Activated CD4-positive, alpha-beta T cell treated with anti-CD3 and anti-CD28 coated beads for 36 hours (primary cell): ENCODE measurements at regions of chr9 and their contacts with region 1.

Region 1: DNA sequence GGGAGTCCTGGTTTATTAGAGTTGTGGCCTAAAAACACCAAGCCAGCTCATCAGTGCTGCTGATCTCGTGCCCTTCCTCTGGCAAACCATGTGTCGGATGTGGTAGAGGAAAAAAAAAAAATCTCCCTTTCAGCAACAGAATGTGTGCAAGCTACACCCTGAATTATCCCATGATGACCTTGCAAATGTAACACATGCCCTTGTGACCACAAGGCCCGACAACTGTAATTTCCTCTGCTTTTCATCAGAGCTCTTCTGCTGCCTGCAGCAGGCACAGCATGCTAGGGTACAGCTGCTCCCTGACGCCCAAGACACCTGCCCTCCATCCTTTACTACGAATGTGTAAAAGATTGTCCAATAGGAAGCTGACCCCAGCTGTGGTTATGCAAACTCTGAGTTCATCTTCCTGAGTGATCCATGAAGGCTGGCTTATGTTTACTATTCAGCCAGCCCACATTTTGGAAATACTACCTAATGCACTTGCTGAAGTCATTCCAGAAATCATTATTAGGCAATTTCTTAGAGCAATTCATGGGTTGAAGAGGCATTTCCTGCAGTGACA is 14.6 kb upstream of the BNC2 start:
- DNase-seq: no peak
- ATAC-seq: no peak
- H3K4me3 Mint-ChIP-seq: no peak overlapping the region
- H3K27ac Mint-ChIP-seq: no peak overlapping the region
- H3K4me1 Mint-ChIP-seq: no peaks in the 10 kb centered on the region
- H3K27me3 Mint-ChIP-seq: no peaks in the 10 kb centered on the region

Region 2: GRCh38 chr9:16367605-16368231 is 517.3 kb before region 1 on chr9:
- CTCF ChIA-PET with region 1: no interaction called
- POLR2A ChIA-PET with region 1: no interaction called
- intact Hi-C with region 1: no loop called
- DNase-seq: no peak
- ATAC-seq: no peak
- H3K4me3 Mint-ChIP-seq: no peak overlapping the region
- H3K27ac Mint-ChIP-seq: no peak overlapping the region
- H3K4me1 Mint-ChIP-seq: no peaks in the 10 kb centered on the region
- H3K27me3 Mint-ChIP-seq: no peaks in the 10 kb centered on the region

Region 3: GRCh38 chr9:16809912-16810610 is 75.0 kb before region 1 on chr9:
- CTCF ChIA-PET with region 1: no interaction called
- POLR2A ChIA-PET with region 1: no interaction called
- intact Hi-C with region 1: no loop called
- DNase-seq: no peak
- ATAC-seq: no peak
- H3K4me3 Mint-ChIP-seq: no peak overlapping the region
- H3K27ac Mint-ChIP-seq: no peak overlapping the region
- H3K4me1 Mint-ChIP-seq: no peaks in the 10 kb centered on the region
- H3K27me3 Mint-ChIP-seq: no peaks in the 10 kb centered on the region

Region 4: GRCh38 chr9:16912197-16912596 is 27.2 kb after region 1 on chr9:
- CTCF ChIA-PET with region 1: no interaction called
- POLR2A ChIA-PET with region 1: no interaction called
- intact Hi-C with region 1: loop called in 1 of 2 experiments (anchors 2 kb)
- DNase-seq: no peak
- ATAC-seq: no peak
- H3K4me3 Mint-ChIP-seq: no peak overlapping the region
- H3K27ac Mint-ChIP-seq: no peak overlapping the region
- H3K4me1 Mint-ChIP-seq: no peaks in the 10 kb centered on the region
- H3K27me3 Mint-ChIP-seq: no peaks in the 10 kb centered on the region

Region 5: DNA sequence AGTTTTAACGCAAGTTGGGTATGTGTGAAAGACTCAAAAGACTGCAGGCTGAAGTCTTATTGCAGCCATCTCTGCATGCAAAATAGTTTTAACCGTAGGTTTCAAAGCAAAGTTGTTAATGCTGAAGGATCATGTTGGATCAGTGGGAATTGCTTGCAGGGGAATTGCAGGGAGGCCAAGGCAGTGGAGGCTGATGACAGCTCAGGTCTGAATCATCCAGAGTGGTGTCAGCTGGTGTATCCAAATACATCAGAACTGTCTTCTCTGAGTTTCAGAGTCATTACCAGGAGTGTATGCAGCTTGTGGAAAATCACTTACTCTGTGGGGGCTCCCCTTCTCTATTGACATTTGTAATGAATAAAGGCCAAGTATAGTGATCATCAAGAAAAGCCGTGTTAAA is 1129.5 kb after region 1 on chr9:
- CTCF ChIA-PET with region 1: no interaction called
- POLR2A ChIA-PET with region 1: no interaction called
- intact Hi-C with region 1: no loop called
- DNase-seq: no peak
- ATAC-seq: no peak
- H3K4me3 Mint-ChIP-seq: no peak overlapping the region
- H3K27ac Mint-ChIP-seq: no peak overlapping the region
- H3K4me1 Mint-ChIP-seq: no peaks in the 10 kb centered on the region
- H3K27me3 Mint-ChIP-seq: no peaks in the 10 kb centered on the region